GM10248 (cell line): ENCODE measurements at regions of chr4 and their contacts with region 1.

Region 1: GRCh38 chr4:67909905-67910584 is 26.2 kb upstream of the TMPRSS11D start:
- DNase-seq: no peak
- CTCF ChIP-seq: peak; percentile 47

Region 2: DNA sequence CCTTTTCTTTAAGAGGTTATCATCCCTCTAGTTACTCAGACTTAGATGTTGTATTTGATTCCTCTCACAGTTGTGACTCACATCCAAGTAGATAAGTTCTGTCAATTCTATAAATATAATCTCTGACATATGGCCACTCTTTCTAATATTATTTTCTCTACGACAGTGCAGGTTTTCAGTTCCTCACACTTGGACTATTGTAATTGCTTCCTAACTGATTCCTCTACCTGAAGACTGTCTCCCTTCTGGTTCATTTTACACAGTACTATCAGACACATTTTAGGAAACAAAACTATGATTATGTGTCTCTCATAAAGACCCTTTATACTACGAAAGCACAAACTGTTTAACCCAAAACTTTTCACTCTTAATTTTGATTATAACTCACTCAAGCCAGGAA is 124.5 kb before region 1 on chr4:
- CTCF ChIA-PET with region 1: no interaction called
- POLR2A ChIA-PET with region 1: no interaction called
- DNase-seq: no peak
- CTCF ChIP-seq: no peak

Region 3: GRCh38 chr4:67820903-67821302 is 89.1 kb before region 1 on chr4:
- CTCF ChIA-PET with region 1: no interaction called
- POLR2A ChIA-PET with region 1: no interaction called
- DNase-seq: no peak
- CTCF ChIP-seq: no peak

Region 4: GRCh38 chr4:67896421-67897065 is 13.5 kb before region 1 on chr4:
- CTCF ChIA-PET with region 1: interaction called, 19 read pairs
- POLR2A ChIA-PET with region 1: no interaction called
- DNase-seq: no peak
- CTCF ChIP-seq: no peak

Region 5: DNA sequence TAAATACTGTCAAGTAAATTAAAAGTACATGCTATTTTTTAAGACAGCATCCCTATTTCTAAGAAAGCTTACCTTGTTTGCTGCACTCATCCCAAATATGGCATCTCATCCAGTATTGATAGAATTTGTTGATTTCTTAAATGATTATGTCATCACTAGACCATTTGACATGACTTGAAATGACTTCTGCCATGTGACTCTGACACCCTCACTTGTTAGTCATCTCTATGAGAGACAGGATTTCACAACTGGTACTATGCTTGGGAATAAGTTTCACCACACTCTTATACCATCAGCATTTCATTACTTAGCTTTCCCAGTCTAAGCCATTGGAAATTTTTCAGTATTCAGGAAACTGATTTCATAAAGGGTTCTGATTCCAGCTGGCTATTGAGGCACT is 164.3 kb after region 1 on chr4:
- CTCF ChIA-PET with region 1: no interaction called
- POLR2A ChIA-PET with region 1: no interaction called
- DNase-seq: no peak
- CTCF ChIP-seq: no peak